Panc1 (cell line): ENCODE measurements at regions of chr3 and their contacts with region 1.

Region 1: GRCh38 chr3:147851062-147851461 is 441.9 kb downstream of the ZIC1 start:
- DNase-seq: no peak
- ATAC-seq: no peak
- H3K4me3 ChIP-seq: no peak overlapping the region
- H3K27ac ChIP-seq: no peak overlapping the region
- H3K4me1 ChIP-seq: no peaks in the 10 kb centered on the region
- H3K27me3 ChIP-seq: no peaks in the 10 kb centered on the region
- CTCF ChIP-seq: no peak

Region 2: GRCh38 chr3:147773116-147773630 is 77.9 kb before region 1 on chr3:
- CTCF ChIA-PET with region 1: no interaction called
- POLR2A ChIA-PET with region 1: no interaction called
- in situ Hi-C with region 1: no loop called
- intact Hi-C with region 1: loop called (anchors 1 kb)
- DNase-seq: no peak
- ATAC-seq: no peak
- H3K4me3 ChIP-seq: no peak overlapping the region
- H3K27ac ChIP-seq: no peak overlapping the region
- H3K4me1 ChIP-seq: no peaks in the 10 kb centered on the region
- H3K27me3 ChIP-seq: no peaks in the 10 kb centered on the region
- CTCF ChIP-seq: no peak

Region 3: DNA sequence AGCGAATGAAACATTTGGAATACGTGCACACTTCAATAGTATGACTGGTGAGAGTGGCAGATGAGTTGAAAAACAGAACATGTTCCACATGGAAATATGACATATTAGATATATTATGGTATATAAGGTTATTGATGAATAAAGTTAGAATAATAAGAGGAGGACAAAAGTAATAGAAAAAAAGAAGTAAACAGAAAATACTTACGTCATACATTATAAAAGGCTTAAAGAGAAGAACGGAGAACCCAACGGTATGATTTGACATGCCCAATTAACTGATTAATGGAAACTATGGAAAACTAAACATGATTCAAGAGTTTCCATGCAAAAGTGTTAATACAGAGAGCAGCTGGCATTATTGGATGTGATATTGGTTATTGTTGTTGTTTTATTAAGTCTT is 257.9 kb after region 1 on chr3:
- CTCF ChIA-PET with region 1: no interaction called
- POLR2A ChIA-PET with region 1: no interaction called
- in situ Hi-C with region 1: no loop called
- intact Hi-C with region 1: no loop called
- DNase-seq: no peak
- ATAC-seq: no peak
- H3K4me3 ChIP-seq: no peak overlapping the region
- H3K27ac ChIP-seq: no peak overlapping the region
- H3K4me1 ChIP-seq: no peaks in the 10 kb centered on the region
- H3K27me3 ChIP-seq: no peaks in the 10 kb centered on the region
- CTCF ChIP-seq: no peak